Endothelial cell of umbilical vein (primary cell): ENCODE measurements at regions of chr9 and their contacts with region 1.

Region 1: DNA sequence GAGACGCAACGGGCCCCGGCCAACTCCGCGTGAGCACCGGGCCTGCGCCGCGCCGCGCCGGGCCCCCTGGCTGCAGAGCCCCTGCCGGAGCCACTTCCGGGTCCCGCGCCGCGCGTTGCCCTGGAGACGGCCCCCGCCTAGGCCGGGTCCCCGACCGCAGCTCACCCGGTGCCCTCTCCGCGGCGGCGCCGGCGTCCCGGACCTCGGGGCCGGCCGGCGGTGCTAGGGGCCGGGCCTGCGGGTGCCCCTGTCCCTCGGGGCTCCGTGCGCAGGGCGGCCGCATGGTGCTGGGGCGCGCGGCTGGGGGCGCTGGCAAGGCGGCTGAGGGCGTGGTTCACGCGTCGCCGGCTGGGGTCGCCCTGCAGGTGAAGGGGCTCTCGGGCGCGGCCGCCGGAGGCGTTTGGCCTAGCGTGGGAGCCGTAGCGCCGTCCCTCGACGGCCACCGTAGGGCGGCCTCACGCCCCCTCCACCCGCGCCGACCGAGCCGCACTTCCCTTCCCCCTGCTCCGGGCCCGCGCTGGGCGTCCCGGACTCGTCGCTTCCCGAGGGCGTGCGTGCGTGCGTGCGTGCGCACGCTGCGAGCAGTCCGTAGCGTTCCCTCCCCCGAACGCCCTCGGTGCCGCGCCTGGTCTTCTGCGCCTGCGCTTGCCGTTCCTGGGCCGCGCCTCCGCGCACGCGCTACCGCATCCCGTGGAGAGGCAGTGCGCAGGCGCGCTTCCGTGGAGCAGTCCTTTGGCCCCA is at the start of gene TMEM250:
- DNase-seq: peak; percentile 98
- H3K4me3 ChIP-seq: peak within 1 kb of the TSS; percentile 67 to 73 (median 70)
- H3K27ac ChIP-seq: peak within 1 kb of the TSS; percentile 41
- H3K4me1 ChIP-seq: peaks cover 12% of the 10 kb centered on the region
- H3K27me3 ChIP-seq: no peaks in the 10 kb centered on the region
- CTCF ChIP-seq: no peak
- POLR2A ChIP-seq: peak; percentile 4
- total RNA-seq, gene TMEM250: 47.4 and 49.9 TPM in 2 replicates

Region 2: GRCh38 chr9:135701959-135702721 is 416.4 kb before region 1 on chr9 and contains the start of gene KCNT1:
- CTCF ChIA-PET with region 1: interaction called, 3 read pairs
- POLR2A ChIA-PET with region 1: no interaction called
- dilution Hi-C with region 1: no loop called
- intact Hi-C with region 1: loop called (anchors 2 kb)
- DNase-seq: peak; percentile 40
- H3K4me3 ChIP-seq: no peak within 1 kb of the TSS
- H3K27ac ChIP-seq: no peak within 1 kb of the TSS
- H3K4me1 ChIP-seq: peaks cover 2% of the 10 kb centered on the region
- H3K27me3 ChIP-seq: peaks cover 0 to 2% of the 10 kb centered on the region in 2 experiments
- CTCF ChIP-seq: peak; percentile 73 to 90
- POLR2A ChIP-seq: no peak
- total RNA-seq, gene KCNT1: not detected in 2 replicates

Region 3: DNA sequence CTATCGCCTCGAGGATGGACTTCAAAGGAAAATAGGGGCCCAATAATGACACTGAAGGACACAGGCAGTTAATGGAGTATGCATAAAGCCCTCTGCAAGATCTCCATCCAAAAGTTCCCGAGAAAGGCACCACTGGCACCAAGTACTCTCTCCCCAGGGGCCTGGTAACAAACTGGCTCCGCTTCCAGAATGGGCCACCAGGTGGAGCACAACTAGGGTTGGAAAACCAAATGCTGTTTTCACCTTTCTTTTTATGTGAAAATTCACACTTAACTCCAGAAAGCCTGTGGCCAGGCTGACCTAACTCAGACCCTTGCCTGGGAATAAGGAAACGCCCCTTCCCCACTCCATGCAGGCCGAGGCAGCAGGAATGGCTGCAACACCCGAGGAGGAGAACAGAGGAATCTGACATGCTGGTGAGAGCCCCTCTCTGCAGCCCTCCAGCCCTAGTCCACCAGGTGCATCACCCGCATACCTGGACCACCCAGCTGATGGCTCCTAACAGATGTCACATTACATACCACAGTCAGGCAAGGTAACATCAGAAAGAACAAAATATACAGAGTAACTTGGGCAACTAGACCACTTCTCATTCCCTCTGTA is 253.9 kb before region 1 on chr9:
- CTCF ChIA-PET with region 1: interaction called, 45 read pairs
- POLR2A ChIA-PET with region 1: no interaction called
- dilution Hi-C with region 1: no loop called
- intact Hi-C with region 1: loop called (anchors 1 kb)
- DNase-seq: peak; percentile 51
- H3K4me3 ChIP-seq: no peak overlapping the region
- H3K27ac ChIP-seq: no peak overlapping the region
- H3K4me1 ChIP-seq: no peaks in the 10 kb centered on the region
- H3K27me3 ChIP-seq: no peaks in the 10 kb centered on the region
- CTCF ChIP-seq: peak; percentile 86 to 87
- POLR2A ChIP-seq: no peak

Region 4: DNA sequence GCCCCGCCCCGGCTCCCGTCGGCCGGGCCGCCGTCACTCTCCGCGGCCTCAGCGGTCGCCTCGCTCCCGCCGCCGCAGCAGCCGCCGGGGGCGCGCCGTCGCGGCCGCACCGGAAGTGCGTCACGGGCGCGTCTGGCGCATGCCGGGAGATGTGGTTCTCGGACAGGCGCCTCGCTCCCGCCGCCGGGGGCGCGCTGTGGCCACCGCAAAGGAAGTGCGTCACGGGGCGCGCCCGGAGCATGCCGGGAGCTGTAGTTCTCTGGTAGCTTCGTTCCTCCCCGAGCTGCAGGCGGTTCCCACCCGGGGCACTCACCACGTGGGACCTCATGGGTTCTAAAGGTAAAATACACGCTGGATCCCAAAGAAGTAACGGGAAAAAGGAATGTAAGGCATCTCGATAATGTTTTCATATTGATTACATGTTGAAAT is 157.2 kb before region 1 on chr9 and contains the start of gene UBAC1:
- CTCF ChIA-PET with region 1: interaction called, 211 read pairs
- POLR2A ChIA-PET with region 1: no interaction called
- dilution Hi-C with region 1: no loop called
- intact Hi-C with region 1: no loop called
- DNase-seq: peak; percentile 95
- H3K4me3 ChIP-seq: peak within 1 kb of the TSS; percentile 71 to 97 (median 78)
- H3K27ac ChIP-seq: no peak within 1 kb of the TSS
- H3K4me1 ChIP-seq: peaks cover 8% of the 10 kb centered on the region
- H3K27me3 ChIP-seq: no peaks in the 10 kb centered on the region
- CTCF ChIP-seq: peak; percentile 27 to 60
- POLR2A ChIP-seq: peak; percentile 32
- total RNA-seq, gene UBAC1: 36.5 and 39.5 TPM in 2 replicates

Region 5: DNA sequence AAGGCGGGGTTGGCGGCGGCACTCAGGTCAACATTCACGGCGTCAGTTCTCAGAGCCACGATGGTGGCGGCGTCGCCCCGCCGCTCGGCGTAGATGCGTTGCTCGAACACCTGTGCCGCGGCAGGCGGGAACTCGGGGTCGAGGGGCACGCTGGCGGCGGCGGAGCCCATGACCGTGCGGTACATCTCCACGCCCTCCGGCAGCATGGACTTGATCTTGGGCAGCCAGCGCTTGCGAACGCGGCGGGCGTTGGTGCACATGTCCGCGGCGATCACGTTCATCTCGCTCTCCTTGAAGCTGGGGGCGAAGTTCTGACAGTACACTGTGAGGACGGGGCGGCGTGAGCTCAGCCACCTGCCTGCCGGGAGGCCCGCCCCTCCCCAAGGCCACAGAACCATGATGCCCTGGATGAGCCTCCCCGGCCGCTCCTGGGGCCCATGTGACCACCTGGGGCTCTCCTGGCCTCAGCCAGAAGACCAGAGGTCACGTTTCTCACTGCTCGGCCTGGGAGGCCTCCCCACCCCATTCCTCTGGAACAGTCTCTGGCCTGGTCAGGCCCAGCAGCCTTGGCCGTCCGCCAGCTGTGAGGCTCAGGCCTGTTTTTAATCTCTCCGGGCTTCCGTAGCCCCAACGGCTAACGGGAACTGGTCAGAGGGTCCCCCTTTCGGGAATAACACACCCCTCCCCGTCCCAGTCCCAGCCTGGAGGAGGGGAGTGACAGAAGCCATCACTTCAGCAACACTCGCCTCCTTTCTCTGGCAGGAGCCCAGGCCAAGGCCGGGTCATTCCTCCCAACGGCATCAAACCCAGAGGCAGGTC is 106.6 kb before region 1 on chr9:
- CTCF ChIA-PET with region 1: interaction called, 5 read pairs
- POLR2A ChIA-PET with region 1: no interaction called
- dilution Hi-C with region 1: no loop called
- intact Hi-C with region 1: loop called (anchors 5 kb)
- DNase-seq: peak; percentile 70
- H3K4me3 ChIP-seq: no peak overlapping the region
- H3K27ac ChIP-seq: peak overlapping the region; percentile 76
- H3K4me1 ChIP-seq: peaks cover 54% of the 10 kb centered on the region
- H3K27me3 ChIP-seq: no peaks in the 10 kb centered on the region
- CTCF ChIP-seq: no peak
- POLR2A ChIP-seq: no peak

Region 6: GRCh38 chr9:136060234-136060948 is 58.1 kb before region 1 on chr9:
- CTCF ChIA-PET with region 1: no interaction called
- POLR2A ChIA-PET with region 1: no interaction called
- dilution Hi-C with region 1: no loop called
- intact Hi-C with region 1: no loop called
- DNase-seq: no peak
- H3K4me3 ChIP-seq: no peak overlapping the region
- H3K27ac ChIP-seq: no peak overlapping the region
- H3K4me1 ChIP-seq: no peaks in the 10 kb centered on the region
- H3K27me3 ChIP-seq: no peaks in the 10 kb centered on the region
- CTCF ChIP-seq: no peak
- POLR2A ChIP-seq: no peak

Region 7: DNA sequence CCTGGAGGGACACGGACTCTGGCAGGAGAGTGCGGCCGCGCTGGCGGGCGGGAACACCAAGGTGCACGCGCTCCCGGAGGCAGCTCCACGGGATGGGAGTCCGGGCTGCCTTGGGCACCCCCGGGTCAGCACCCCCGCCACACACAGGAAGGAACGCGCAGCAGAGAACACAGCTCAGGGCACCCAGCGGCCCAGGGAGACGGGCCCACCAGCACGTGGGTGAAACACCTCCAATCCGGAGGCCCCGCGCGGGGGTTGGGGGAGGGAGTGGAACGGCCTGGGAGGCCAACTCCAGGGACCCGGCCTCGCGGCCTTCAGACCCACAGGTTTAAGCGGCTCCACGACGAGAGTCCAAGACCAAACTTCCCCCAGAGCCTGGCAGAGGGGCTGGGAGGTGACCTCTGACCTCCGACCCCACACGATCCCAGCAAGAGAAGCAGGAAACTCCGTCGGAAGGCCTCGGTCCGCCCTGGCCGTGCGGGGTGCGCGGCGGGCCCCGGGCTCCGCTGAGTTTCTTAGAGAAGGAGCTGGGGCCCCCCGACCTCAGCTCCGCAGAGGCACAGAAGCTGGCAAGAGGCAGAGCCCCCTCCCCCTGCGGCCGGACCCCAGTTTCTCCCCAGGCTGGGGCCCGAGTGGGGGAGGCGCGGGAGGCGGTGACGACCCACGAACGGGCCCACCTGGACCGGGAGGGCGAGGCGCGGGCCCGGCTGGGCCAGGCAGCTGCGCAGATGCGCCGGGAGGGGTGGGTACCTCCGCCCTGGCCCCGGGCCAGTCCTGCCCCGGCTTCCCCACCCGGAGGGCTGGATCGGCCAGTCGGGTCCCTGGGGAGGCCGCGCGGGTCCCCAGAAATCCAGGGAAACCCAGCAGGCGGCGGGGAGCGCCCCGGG is 24.3 kb before region 1 on chr9:
- CTCF ChIA-PET with region 1: interaction called, 148 read pairs
- POLR2A ChIA-PET with region 1: no interaction called
- dilution Hi-C with region 1: no loop called
- intact Hi-C with region 1: loop called (anchors 1 kb)
- DNase-seq: peak; percentile 33
- H3K4me3 ChIP-seq: peak overlapping the region; percentile 58 to 86 (median 68)
- H3K27ac ChIP-seq: peak overlapping the region; percentile 64
- H3K4me1 ChIP-seq: peaks cover 19% of the 10 kb centered on the region
- H3K27me3 ChIP-seq: no peaks in the 10 kb centered on the region
- CTCF ChIP-seq: no peak
- POLR2A ChIP-seq: peak; percentile 17

Region 8: DNA sequence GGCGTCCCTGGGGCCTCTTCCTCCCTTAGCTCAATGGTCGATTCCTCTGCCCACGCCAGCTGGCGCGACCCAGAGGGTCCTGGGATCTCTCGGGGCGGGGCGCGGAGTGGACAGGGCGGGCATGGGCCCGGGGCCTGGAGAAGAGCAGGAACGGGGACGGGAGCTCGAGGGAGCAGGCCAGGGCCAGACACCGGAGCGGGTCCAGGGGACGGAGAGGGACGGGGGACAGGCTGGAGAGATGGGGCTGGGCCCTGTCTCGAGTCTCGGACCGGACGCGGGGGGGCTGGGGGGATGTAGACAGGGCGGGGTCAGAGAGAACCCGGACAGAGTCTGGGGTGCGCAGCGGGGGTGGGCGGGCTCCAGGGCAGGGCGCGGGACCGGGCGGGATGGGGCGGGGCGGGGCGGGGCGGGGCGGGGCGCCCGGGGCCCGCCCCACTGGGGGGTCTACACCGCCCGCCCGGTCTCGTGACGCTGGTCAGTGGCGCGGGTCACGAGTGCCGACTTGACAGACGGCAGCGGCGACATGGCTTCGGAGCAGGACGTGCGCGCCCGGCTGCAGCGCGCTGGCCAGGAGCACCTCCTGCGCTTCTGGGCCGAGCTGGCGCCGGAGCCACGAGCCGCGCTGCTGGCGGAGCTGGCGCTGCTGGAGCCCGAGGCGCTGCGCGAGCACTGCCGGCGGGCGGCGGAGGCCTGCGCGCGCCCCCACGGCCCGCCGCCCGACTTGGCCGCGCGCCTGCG is 958.7 kb after region 1 on chr9 and contains the start of gene UAP1L1:
- CTCF ChIA-PET with region 1: no interaction called
- POLR2A ChIA-PET with region 1: no interaction called
- dilution Hi-C with region 1: no loop called
- intact Hi-C with region 1: no loop called
- DNase-seq: peak; percentile 43
- H3K4me3 ChIP-seq: peak within 1 kb of the TSS; percentile 54 to 88 (median 60)
- H3K27ac ChIP-seq: no peak within 1 kb of the TSS
- H3K4me1 ChIP-seq: peaks cover 5% of the 10 kb centered on the region
- H3K27me3 ChIP-seq: no peaks in the 10 kb centered on the region
- CTCF ChIP-seq: no peak
- POLR2A ChIP-seq: peak; percentile 71
- total RNA-seq, gene UAP1L1: 38.1 and 41.7 TPM in 2 replicates